GM13977 (cell line): ENCODE measurements at regions of chr2 and their contacts with region 1.

Region 1: DNA sequence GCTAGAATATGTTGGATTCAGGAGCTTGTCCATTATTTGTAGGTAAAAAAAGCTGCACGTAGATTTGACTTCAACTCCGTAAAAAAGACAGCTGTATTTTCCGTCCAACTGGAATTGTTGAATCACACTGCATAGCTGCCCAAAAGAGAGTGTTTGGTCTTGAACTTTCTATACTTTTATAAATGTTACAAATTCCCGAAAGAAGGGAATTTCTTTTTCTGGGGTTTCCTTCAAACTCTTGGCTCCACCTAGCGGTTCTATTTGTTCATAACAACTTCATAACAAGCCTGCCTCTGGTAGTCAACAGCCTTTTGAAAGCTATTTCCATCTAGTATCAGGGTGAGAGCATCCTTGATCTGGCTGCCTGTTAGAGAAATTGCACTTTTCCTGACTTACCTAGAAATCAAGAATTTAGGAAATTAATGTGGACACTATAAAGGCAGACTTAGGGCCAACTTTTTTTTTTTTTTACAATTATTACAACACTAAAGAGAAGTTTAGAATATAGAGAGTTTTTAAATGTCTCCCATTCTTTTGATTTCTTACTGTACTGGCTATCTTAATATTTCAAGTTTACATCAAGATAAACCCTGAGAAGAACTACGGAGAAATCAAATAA is 48.1 kb downstream of the TMEM185B start:
- DNase-seq: peak; percentile 49
- CTCF ChIP-seq: peak; percentile 57

Region 2: DNA sequence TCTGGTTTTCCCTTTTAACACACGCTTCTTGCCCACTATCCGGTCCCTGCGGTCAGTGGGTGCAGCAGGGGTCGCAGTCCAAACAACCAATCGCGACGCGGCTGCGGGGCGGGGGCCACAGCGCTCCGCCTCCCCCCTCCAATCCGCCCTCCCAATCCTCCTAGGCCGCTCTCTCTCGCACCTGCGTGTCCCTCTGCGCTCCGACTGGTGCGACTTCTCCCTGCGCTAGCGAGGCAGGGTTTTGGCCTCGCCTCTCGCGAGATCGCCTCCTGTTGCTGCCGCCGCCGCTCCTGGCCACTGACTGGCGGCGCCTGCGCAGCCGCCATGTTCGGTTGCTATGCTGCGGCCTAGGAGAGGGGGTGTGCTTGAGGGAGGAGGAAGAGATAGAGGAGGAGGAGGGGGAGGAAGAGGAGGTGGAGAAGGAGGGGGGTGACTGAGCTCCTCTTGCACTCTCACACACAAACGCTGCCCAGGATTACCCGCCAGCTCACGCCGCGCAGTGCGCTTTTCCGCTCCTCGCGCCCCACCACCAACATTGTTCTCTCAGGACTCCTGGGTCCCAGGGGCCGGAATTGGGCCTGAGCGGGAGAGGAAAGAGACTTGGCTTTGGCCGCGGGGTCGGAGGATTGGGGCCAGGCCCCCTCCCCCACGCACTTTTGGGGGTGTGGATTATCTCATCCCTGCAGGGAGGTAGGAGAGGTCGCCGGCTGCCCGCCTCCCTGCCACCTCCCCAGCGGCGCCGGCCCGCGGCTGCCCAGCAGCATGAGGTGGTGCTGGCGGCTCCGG is 415.4 kb before region 1 on chr2 and contains the start of gene PTPN4:
- in situ Hi-C with region 1: loop called (anchors 10 kb)
- DNase-seq: peak; percentile 96
- CTCF ChIP-seq: no peak

Region 3: DNA sequence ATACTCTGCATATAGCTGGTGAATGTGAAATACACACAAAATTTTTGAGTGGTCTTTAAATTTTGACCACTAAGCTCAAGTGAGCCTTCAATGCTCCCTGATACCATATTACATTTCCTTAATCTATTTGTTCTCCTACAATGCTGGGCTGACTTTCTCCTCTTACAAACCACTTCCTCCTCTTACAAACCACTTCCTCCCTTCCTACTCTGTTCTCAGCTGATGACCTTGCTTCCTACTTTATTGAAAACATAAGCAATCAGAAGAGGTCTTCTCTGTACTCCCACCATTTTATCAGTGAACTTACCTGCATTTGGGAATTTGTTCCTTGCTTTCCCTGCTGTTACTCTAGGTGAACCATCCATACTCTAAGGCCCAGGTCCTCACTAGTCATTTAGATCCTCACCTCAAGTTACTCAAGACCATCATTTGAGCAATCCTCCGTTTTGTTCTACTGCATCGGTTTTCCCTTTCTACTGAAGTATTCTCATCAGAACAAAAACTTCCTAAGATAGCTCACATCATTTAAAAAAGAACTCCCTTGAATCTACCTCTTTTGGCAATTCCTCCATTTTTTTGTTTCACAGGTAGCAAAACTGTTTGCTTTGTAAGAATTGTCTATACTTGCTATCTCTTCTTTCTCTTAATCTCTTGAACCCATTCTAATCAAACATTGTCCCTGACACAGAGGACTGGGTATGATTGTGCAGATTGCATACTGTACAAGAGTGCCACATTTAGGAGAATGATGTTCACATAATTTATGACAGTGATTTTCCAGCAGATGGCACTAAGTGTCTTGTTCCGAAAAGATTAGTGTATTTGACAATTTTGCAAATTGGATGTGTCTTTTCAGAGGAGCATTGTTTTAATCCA is 65.6 kb before region 1 on chr2:
- in situ Hi-C with region 1: loop called (anchors 5 kb)
- DNase-seq: peak; percentile 39
- CTCF ChIP-seq: peak; percentile 49